GM12878 (cell line): ENCODE measurements at regions of chrX and their contacts with region 1.

Region 1: GRCh38 chrX:154714925-154715324 is 36.0 kb downstream of the GAB3 start:
- DNase-seq: no peak
- ATAC-seq: peak; percentile 78
- H3K4me3 ChIP-seq: no peak overlapping the region
- H3K27ac ChIP-seq: no peak overlapping the region
- H3K4me1 ChIP-seq: peaks cover 37% of the 10 kb centered on the region
- H3K27me3 ChIP-seq: no peaks in the 10 kb centered on the region
- CTCF ChIP-seq: peak; percentile 78 to 93 (median 79)
- EP300 ChIP-seq: no peak
- POLR2A ChIP-seq: no peak
- RAD21 ChIP-seq: peak; percentile 86

Region 2: GRCh38 chrX:154784149-154784995 is 69.4 kb after region 1 on chrX:
- CTCF ChIA-PET with region 1: no interaction called
- POLR2A ChIA-PET with region 1: no interaction called
- RAD21 ChIA-PET with region 1: no interaction called
- SMC1A ChIA-PET with region 1: no interaction called
- in situ Hi-C with region 1: no loop called
- intact Hi-C with region 1: no loop called
- DNase-seq: no peak
- ATAC-seq: no peak
- H3K4me3 ChIP-seq: no peak overlapping the region
- H3K27ac ChIP-seq: no peak overlapping the region
- H3K4me1 ChIP-seq: no peaks in the 10 kb centered on the region; the same call in 1 of the 2 replicates
- H3K27me3 ChIP-seq: no peaks in the 10 kb centered on the region
- CTCF ChIP-seq: no peak
- EP300 ChIP-seq: no peak
- POLR2A ChIP-seq: no peak
- RAD21 ChIP-seq: no peak

Region 3: DNA sequence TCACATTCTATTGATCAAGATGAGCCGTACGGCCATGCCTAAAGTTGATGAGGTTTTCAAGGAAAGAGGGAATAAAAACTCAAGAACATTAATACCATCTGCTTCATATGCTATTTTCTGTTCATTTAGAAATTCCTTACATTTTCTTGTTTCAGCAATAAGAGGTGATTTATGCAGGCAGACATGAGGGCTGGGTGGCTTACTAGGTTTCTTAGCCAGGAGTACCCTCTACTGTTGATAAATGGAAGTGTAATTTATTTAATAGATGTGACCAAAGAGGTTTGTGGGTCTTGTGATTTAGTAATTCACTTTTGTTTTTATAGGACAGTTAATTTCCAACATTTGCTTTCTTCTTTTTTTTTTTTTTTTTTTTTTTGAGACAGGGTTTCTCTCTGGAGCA is 125.9 kb after region 1 on chrX:
- CTCF ChIA-PET with region 1: interaction called, 4 read pairs
- POLR2A ChIA-PET with region 1: no interaction called
- RAD21 ChIA-PET with region 1: no interaction called
- SMC1A ChIA-PET with region 1: interaction called, 3 read pairs
- in situ Hi-C with region 1: no loop called
- intact Hi-C with region 1: loop called (anchors 5 kb)
- DNase-seq: no peak
- ATAC-seq: peak; percentile 76
- H3K4me3 ChIP-seq: no peak overlapping the region
- H3K27ac ChIP-seq: no peak overlapping the region
- H3K4me1 ChIP-seq: no peaks in the 10 kb centered on the region
- H3K27me3 ChIP-seq: no peaks in the 10 kb centered on the region
- CTCF ChIP-seq: peak; percentile 19 to 64 (median 42); a peak in 3 of 6 replicates
- EP300 ChIP-seq: no peak
- POLR2A ChIP-seq: no peak
- RAD21 ChIP-seq: peak; percentile 85